ENCODE measurements at regions of chr4 and their contacts with region 1.

Region 1: DNA sequence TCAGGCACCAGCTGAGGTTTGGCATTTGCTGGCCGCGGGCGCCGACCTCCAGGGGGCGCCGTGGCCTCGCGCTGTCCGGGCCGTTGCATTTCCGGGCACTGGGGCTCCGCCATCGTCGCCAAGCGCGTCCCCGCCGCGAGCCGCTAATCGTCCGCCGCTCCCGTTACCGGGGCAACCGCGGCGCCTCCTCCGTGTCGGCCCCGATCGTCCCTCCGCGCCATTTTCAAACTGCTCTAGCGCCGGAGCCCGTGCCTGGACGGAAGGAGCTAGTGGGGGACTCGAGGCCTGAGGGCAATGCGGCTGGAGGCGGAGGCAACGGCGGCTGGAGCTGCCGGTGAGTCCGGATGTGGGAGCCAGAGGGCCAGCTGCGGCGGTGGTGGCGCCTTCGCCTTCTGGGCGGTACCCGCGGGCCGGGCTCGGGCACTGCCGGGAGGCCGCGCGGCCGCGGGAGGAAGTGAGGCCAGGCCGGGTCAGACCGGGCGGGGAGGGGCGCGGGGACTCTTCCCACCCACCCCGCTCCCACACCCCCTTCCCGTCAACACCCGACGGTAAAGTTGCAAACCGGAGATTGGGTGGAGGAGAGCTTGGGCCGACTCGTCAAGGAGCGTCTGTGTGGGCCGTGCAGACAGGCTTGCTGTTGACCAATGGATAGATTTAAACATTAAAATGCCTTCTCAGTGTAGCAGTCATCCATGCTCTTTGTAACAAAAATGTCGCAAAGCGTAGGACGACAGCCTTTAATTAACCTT is at the start of gene CEP135:
- DNase-seq: peak; percentile 80
- H3K4me3 ChIP-seq: peak within 1 kb of the TSS; percentile 79
- H3K27ac ChIP-seq: peak within 1 kb of the TSS; percentile 99
- H3K27me3 ChIP-seq: no peaks in the 10 kb centered on the region
- CTCF ChIP-seq: peak; percentile 80
- polyA plus RNA-seq, gene CEP135: 3.8 and 6.4 TPM in 2 replicates

Region 2: DNA sequence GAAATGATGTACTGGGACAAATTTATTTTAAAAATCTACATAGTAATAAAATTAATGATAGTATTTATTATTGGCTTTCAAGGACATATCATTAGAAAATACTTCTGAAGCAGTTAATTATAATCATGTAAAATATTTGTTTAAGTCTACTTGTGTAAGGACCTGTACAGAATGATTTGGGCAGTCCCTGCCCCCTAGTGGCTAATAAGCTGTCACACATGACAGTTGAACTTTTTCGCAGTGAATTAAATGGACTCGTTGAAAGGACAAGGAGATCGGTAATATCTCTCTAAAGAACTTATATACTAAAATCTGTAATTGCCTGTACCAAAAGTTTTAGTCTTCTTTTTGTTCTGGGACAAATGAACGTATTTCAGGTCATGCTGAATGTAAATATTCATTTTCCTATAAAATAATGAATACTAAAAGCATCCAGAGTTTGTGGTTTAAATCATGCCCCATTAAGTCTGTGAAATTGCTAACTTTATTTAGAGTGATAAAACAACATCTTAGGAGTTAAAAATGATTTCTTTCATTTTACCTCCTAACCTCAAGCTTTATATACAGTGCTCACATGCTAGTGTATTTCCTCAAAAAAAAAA is 81.8 kb before region 1 on chr4:
- CTCF ChIA-PET with region 1: interaction called, 20 read pairs
- POLR2A ChIA-PET with region 1: interaction called, 6 read pairs
- DNase-seq: no peak
- H3K4me3 ChIP-seq: no peak overlapping the region
- H3K27ac ChIP-seq: no peak overlapping the region
- H3K27me3 ChIP-seq: no peaks in the 10 kb centered on the region
- CTCF ChIP-seq: peak; percentile 85

Region 3: GRCh38 chr4:55926610-55927009 is 22.3 kb before region 1 on chr4:
- CTCF ChIA-PET with region 1: interaction called, 53 read pairs
- POLR2A ChIA-PET with region 1: interaction called, 3 read pairs
- DNase-seq: no peak
- H3K4me3 ChIP-seq: no peak overlapping the region
- H3K27ac ChIP-seq: no peak overlapping the region
- H3K27me3 ChIP-seq: no peaks in the 10 kb centered on the region
- CTCF ChIP-seq: no peak

Region 4: GRCh38 chr4:55965585-55965984 is 16.7 kb after region 1 on chr4:
- CTCF ChIA-PET with region 1: interaction called, 18 read pairs
- POLR2A ChIA-PET with region 1: interaction called, 3 read pairs
- DNase-seq: no peak
- H3K4me3 ChIP-seq: no peak overlapping the region
- H3K27ac ChIP-seq: no peak overlapping the region
- H3K27me3 ChIP-seq: no peaks in the 10 kb centered on the region
- CTCF ChIP-seq: no peak

Region 5: DNA sequence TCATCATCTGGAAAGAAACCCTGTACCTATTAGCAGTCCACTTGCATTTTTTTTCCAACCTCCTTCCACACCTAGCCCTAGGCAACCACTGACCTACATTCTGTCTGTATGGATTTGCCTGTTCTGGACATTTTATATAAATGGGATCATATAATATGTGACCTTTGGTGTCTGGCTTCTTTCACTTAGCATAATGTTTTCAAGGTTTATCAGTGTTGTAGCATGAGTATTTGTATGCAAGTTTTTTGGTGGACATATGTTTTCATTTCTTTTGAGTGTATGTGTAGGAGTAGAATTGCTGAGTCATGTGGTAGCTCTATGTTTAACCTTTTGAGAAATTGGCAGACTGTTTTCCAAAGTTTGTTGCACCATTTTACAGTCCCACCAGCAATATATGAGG is 198.5 kb after region 1 on chr4:
- CTCF ChIA-PET with region 1: no interaction called
- POLR2A ChIA-PET with region 1: no interaction called
- DNase-seq: no peak
- H3K4me3 ChIP-seq: no peak overlapping the region
- H3K27ac ChIP-seq: no peak overlapping the region
- H3K27me3 ChIP-seq: no peaks in the 10 kb centered on the region
- CTCF ChIP-seq: no peak

Region 6: GRCh38 chr4:56297776-56298175 is 348.9 kb after region 1 on chr4:
- CTCF ChIA-PET with region 1: interaction called, 10 read pairs
- POLR2A ChIA-PET with region 1: no interaction called
- DNase-seq: no peak
- H3K4me3 ChIP-seq: no peak overlapping the region
- H3K27ac ChIP-seq: no peak overlapping the region
- H3K27me3 ChIP-seq: no peaks in the 10 kb centered on the region
- CTCF ChIP-seq: no peak

Measured in AG04450 (cell line).